Lower lobe of right lung (tissue), 2 donors: ENCODE measurements at regions of chr10 and their contacts with region 1.

Region 1: GRCh38 chr10:28250782-28251181 is 52.1 kb downstream of the MPP7 start:
- DNase-seq: no peak
- ATAC-seq: peak in 1 of 2 donors; percentile 25
- H3K4me3 ChIP-seq: no peak overlapping the region
- H3K27ac ChIP-seq: no peak overlapping the region
- H3K4me1 ChIP-seq: peaks cover 18% of the 10 kb centered on the region
- H3K27me3 ChIP-seq: no peaks in the 10 kb centered on the region
- CTCF ChIP-seq: peak; percentile 49

Region 2: DNA sequence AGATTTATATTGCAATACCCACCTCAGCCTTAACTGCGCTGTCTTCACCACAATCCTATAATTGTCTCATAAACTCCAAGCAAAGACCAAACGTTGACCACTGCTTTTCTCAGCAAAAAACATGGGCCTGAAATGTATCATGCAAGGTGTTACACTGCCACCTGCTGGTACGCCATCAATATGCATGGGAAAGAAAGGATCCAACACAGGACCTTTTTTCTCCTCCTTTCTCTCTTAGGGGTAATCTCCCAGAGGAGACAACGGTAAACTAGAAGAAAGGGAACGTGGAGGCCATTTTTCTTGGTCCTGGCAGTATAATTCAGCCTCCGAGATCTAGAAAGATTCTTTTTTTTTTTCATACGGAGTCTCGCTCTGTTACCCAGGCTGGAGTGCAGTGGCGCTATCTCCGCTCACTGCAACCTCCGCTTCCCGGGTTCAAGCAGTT is 131.1 kb after region 1 on chr10:
- intact Hi-C with region 1: loop called (anchors 5 kb)
- DNase-seq: peak; percentile 76
- ATAC-seq: peak; percentile 85 to 94
- H3K4me3 ChIP-seq: no peak overlapping the region
- H3K27ac ChIP-seq: no peak overlapping the region
- H3K4me1 ChIP-seq: no peaks in the 10 kb centered on the region
- H3K27me3 ChIP-seq: no peaks in the 10 kb centered on the region
- CTCF ChIP-seq: peak; percentile 93

Region 3: DNA sequence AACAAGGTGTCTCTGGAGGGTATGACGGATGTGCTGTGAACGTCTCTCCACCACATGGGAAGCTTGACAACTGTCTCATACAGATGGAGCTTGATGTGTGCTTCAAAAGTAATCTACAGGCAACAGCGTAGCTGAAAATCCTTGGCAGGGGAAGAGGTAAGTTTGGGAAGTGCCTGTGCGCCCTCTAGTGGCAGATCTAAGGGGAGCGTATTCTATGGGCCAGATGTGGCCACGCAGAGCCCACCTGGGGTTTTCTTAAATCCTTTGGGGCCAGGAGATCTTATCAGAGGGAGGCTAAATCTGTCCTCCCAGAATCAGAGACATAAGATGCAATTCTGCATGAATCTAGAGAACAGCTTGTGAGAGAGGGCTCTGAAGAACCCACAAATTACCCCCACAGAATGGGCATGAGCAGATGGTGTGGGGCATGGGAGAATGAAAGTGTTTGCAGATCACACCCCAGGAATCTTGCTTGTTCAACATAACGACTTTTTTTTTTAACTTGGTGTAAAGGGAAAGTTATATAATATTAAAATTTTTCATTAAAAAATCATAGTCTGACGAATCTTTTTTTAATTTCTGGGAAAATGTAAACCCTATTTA is 143.3 kb after region 1 on chr10:
- intact Hi-C with region 1: no loop called
- DNase-seq: peak; percentile 65
- ATAC-seq: peak; percentile 92
- H3K4me3 ChIP-seq: no peak overlapping the region
- H3K27ac ChIP-seq: no peak overlapping the region
- H3K4me1 ChIP-seq: no peaks in the 10 kb centered on the region
- H3K27me3 ChIP-seq: no peaks in the 10 kb centered on the region
- CTCF ChIP-seq: peak; percentile 91

Region 4: DNA sequence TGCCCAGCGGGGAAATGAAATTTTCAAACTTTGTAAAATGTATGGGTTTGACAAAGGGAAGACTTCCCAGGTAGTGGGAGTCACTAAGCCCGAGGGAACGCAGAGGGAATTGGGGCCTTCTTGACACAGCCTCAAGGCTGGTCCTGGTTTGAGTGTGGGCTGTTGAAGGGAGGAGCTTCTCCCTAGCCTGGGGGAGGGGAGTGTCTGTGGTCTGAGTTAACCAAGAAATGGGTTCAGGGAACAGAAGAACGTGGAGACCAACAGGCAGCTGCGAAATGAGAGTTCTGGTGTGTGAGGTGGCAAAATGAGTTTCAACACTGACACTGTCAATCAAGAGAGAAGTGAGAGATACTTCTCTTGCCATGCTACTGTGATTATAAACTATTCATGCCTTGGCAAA is 393.9 kb after region 1 on chr10:
- intact Hi-C with region 1: no loop called
- DNase-seq: no peak
- ATAC-seq: no peak
- H3K4me3 ChIP-seq: no peak overlapping the region
- H3K27ac ChIP-seq: no peak overlapping the region
- H3K4me1 ChIP-seq: no peaks in the 10 kb centered on the region
- H3K27me3 ChIP-seq: no peaks in the 10 kb centered on the region
- CTCF ChIP-seq: no peak